A549 (cell line): ENCODE measurements at regions of chr19 and their contacts with region 1.

Region 1: GRCh38 chr19:32345261-32346207 is at the start of gene ZNF507:
- DNase-seq: peak; percentile 92 to 97
- ATAC-seq: peak; percentile 85 to 92
- H3K4me3 ChIP-seq: peak within 1 kb of the TSS; percentile 72
- H3K27ac ChIP-seq: peak within 1 kb of the TSS; percentile 89
- H3K4me1 ChIP-seq: peaks cover 41% of the 10 kb centered on the region
- CTCF ChIP-seq: no peak
- EP300 ChIP-seq: no peak; a peak in 1 of 5 replicates
- POLR2A ChIP-seq: peak; percentile 87
- RAD21 ChIP-seq: no peak; a peak in 1 of 5 replicates
- polyA plus RNA-seq, gene ZNF507: 49.8 and 50.1 TPM in 2 replicates

Region 2: DNA sequence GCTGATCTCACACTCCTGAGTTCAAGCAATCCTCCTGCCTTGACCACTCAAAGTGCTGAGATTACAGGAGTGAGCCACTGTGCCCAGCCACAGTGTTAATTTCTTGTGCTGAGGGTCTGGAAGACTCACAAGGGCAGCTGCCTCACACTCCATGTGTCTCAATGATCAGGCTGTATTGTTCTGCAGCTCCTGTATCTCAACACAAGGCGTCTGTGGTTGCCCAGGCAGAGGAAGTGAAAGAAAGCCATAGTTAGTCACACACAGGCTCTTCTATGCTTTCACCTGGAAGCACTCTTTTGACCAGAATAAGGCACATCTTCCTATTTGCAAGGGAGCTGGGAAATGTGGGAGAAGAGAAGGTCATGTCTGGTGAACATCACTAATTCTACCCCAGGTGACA is 107.5 kb before region 1 on chr19:
- CTCF ChIA-PET with region 1: no interaction called
- POLR2A ChIA-PET with region 1: no interaction called
- DNase-seq: no peak
- ATAC-seq: peak in 1 of 2 experiments; percentile 54; a peak in 3 of 6 replicates
- H3K4me3 ChIP-seq: no peak overlapping the region
- H3K27ac ChIP-seq: no peak overlapping the region
- H3K4me1 ChIP-seq: no peaks in the 10 kb centered on the region
- CTCF ChIP-seq: no peak
- EP300 ChIP-seq: no peak
- POLR2A ChIP-seq: no peak
- RAD21 ChIP-seq: no peak

Region 3: GRCh38 chr19:32302778-32303177 is 42.8 kb before region 1 on chr19:
- CTCF ChIA-PET with region 1: no interaction called
- POLR2A ChIA-PET with region 1: no interaction called
- DNase-seq: no peak
- ATAC-seq: no peak
- H3K4me3 ChIP-seq: no peak overlapping the region
- H3K27ac ChIP-seq: no peak overlapping the region
- H3K4me1 ChIP-seq: no peaks in the 10 kb centered on the region
- CTCF ChIP-seq: no peak
- EP300 ChIP-seq: no peak
- POLR2A ChIP-seq: no peak
- RAD21 ChIP-seq: no peak

Region 4: GRCh38 chr19:32357720-32358119 is 12.2 kb after region 1 on chr19:
- CTCF ChIA-PET with region 1: interaction called, 74 read pairs
- POLR2A ChIA-PET with region 1: interaction called, 5 read pairs
- DNase-seq: peak; percentile 46 to 61
- ATAC-seq: peak; percentile 66 to 73; a peak in 4 of 6 replicates
- H3K4me3 ChIP-seq: no peak overlapping the region
- H3K27ac ChIP-seq: no peak overlapping the region
- H3K4me1 ChIP-seq: peaks cover 17% of the 10 kb centered on the region
- CTCF ChIP-seq: peak; percentile 70
- EP300 ChIP-seq: no peak
- POLR2A ChIP-seq: no peak
- RAD21 ChIP-seq: peak; percentile 54 to 55

Region 5: GRCh38 chr19:32373585-32374295 is 28.2 kb after region 1 on chr19:
- CTCF ChIA-PET with region 1: interaction called, 122 read pairs
- POLR2A ChIA-PET with region 1: interaction called, 29 read pairs
- DNase-seq: peak; percentile 96 to 100
- ATAC-seq: peak; percentile 98 to 99
- H3K4me3 ChIP-seq: peak overlapping the region; percentile 30
- H3K27ac ChIP-seq: peak overlapping the region; percentile 84 to 89
- H3K4me1 ChIP-seq: peaks cover 55% of the 10 kb centered on the region
- CTCF ChIP-seq: no peak
- EP300 ChIP-seq: peak; percentile 82 to 95; a peak in 3 of 5 replicates
- POLR2A ChIP-seq: no peak
- RAD21 ChIP-seq: peak in 1 of 2 experiments; percentile 42; a peak in 2 of 5 replicates

Region 6: DNA sequence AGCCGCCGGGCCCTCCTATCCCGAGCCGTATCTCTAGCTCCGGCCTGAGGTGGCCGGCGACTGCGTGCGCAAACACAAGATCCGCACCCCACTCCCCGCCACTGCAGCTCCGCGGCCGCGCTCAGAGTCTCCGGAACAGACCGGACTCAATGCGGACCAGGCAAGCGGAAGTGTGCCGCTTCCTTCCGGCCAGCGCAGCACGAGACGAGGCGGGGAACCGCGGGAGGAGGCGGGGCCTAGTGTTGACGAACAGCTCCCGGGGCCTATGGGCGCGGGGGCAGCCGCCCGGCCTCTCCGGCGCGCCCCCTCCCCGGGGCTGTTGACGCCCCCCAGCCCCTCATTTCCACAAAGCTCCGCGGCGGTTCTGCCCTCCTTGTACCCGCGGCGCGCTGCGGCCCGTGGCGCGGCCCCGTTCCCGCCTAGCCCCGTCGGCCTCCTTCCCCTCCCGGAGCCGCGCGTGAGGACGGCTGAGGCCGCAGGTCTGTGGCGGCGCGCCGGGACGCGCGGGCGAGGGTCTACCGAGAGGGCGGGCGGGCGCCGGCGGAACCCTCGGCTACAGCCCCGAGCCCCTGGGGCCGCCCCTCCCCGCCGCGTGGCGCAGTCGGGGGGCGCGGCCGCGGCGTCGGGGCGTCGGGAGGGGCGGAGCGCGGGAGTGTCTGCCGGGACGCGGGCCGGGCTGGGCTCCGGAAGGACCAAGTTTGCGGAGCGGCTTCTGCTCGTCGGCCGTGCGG is 60.1 kb after region 1 on chr19 and contains the start of gene DPY19L3:
- CTCF ChIA-PET with region 1: interaction called, 8 read pairs
- POLR2A ChIA-PET with region 1: interaction called, 15 read pairs
- DNase-seq: peak; percentile 98 to 99
- ATAC-seq: peak; percentile 97 to 98
- H3K4me3 ChIP-seq: peak within 1 kb of the TSS; percentile 84
- H3K27ac ChIP-seq: peak within 1 kb of the TSS; percentile 94 to 97
- H3K4me1 ChIP-seq: peaks cover 24% of the 10 kb centered on the region
- CTCF ChIP-seq: no peak
- EP300 ChIP-seq: no peak
- POLR2A ChIP-seq: peak; percentile 97
- RAD21 ChIP-seq: no peak
- polyA plus RNA-seq, gene DPY19L3: 28.9 and 29.6 TPM in 2 replicates

Region 7: DNA sequence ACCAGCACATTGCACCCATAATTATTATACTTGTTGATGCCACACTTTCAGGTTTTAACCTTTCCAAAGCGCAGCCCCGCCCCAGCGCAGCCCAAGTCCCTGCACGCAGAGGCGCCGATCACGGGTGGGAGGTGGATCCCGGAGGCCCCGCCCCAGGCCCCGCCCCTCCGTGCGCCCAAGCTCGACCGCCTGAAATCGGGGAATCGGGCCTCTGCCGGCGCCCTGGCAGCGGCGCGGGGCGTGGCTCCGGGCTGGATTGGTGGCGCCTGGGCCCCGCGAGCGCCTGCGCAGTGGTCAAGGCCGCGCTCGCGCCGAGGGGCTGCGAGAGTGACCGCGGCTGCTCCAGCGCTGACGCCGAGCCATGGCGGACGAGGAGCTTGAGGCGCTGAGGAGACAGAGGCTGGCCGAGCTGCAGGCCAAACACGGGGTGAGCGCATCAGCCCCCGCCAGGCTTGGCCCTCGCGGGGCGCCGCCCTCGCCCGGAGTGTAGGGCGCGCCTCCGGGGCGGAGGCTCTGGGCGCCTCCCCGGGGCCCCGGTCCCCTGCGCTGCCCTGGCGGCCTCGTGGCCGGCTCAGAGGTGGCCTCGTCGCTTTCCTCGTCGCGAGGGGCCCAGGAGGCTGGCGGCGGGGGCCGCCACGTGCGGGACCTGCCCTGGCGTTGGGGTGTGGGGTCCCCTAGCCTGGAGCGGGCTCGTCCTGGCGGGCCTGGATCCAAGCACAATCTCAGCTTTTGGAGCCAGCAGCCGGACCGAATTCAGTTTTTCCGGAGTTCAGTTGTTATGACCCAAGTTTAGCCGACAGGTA is 235.6 kb after region 1 on chr19 and contains the start of gene PDCD5:
- CTCF ChIA-PET with region 1: interaction called, 182 read pairs
- POLR2A ChIA-PET with region 1: interaction called, 15 read pairs
- DNase-seq: peak; percentile 98
- ATAC-seq: peak; percentile 86 to 94
- H3K4me3 ChIP-seq: peak within 1 kb of the TSS; percentile 94
- H3K27ac ChIP-seq: peak within 1 kb of the TSS; percentile 91 to 93
- H3K4me1 ChIP-seq: peaks cover 16% of the 10 kb centered on the region
- CTCF ChIP-seq: no peak
- EP300 ChIP-seq: no peak
- POLR2A ChIP-seq: peak; percentile 98
- RAD21 ChIP-seq: no peak
- polyA plus RNA-seq, gene PDCD5: 196 and 445 TPM in 2 replicates